Activated CD4-positive, alpha-beta T cell treated with anti-CD3 and anti-CD28 coated beads for 36 hours (primary cell): ENCODE measurements at regions of chr14 and their contacts with region 1.

Region 1: DNA sequence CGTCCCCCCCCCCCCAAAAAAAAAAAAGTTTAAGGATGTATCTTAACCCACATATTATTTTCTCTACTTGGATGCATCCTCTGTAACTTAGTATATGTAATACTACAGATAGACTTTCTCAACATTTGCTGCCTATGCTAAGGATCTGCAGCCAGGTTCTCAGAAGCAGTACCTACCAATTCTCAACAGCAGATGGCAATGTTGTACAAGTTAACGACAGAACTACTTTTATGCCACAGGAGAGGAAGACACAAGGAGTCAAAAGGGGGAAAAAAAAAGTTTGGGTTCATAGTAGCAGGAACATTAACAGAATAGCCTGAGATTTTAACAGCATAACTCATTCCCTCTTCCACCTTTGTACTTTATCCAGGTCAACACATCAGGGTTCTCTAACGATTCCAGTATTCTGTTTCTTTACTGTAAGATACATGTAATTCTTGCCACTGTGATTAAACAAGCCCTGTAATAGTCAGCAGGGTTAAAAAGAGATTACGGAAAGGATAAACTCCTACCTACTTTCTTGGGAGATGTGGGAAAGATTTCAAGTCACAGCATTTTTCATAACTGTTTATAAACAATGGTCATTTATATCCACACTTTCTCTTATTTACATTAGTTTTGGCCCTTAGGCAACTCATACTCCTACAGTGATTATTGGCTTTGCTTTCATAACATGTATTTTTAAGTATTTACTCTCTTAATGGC is 5.7 kb upstream of the NEK9 start:
- DNase-seq: peak; percentile 53
- ATAC-seq: peak; percentile 82
- H3K4me3 Mint-ChIP-seq: no peak overlapping the region
- H3K27ac Mint-ChIP-seq: peak overlapping the region; percentile 33
- H3K4me1 Mint-ChIP-seq: peaks cover 18% of the 10 kb centered on the region
- H3K27me3 Mint-ChIP-seq: no peaks in the 10 kb centered on the region

Region 2: DNA sequence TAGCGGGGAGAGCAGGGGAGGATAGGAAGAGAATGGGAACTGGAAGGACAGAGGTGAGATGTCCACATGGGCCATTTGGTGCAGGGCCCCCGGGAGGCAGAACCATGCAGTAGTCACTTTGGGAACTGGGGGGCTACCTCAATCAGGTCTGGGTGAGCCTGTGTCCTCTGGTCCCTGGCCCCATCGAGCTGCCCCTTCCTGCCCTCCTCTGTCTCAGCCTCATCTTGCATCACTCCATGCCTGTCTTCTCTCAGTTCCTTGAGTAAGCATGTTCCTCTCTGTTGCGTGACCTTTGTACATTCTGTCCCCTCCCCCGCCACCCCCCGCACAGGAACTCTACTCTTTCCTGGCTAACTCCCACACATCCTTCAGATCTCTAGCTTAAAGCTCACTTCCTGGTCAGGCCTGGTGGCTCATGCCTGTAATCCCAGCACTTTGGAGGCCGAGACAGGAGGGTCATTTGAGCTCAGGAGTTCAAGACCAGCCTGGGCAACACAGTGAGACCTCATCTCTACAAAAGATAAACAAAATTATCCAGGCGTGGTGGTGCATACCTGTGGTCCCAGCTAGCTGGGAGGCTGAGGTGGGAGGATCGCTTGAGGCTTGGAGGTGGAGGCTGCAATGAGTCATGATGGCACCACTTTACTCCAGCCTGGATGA is 169.3 kb after region 1 on chr14:
- CTCF ChIA-PET with region 1: interaction called, 221 read pairs
- POLR2A ChIA-PET with region 1: no interaction called
- intact Hi-C with region 1: loop called (anchors 1 kb)
- DNase-seq: peak; percentile 73
- ATAC-seq: peak; percentile 79
- H3K4me3 Mint-ChIP-seq: no peak overlapping the region
- H3K27ac Mint-ChIP-seq: peak overlapping the region; percentile 80
- H3K4me1 Mint-ChIP-seq: peaks cover 26% of the 10 kb centered on the region
- H3K27me3 Mint-ChIP-seq: no peaks in the 10 kb centered on the region

Region 3: GRCh38 chr14:75654127-75654732 is 521.7 kb after region 1 on chr14:
- CTCF ChIA-PET with region 1: no interaction called
- POLR2A ChIA-PET with region 1: no interaction called
- intact Hi-C with region 1: loop called in 1 of 2 experiments (anchors 5 kb)
- DNase-seq: peak; percentile 91
- ATAC-seq: peak; percentile 94
- H3K4me3 Mint-ChIP-seq: no peak overlapping the region
- H3K27ac Mint-ChIP-seq: no peak overlapping the region
- H3K4me1 Mint-ChIP-seq: peaks cover 11% of the 10 kb centered on the region
- H3K27me3 Mint-ChIP-seq: no peaks in the 10 kb centered on the region